Psoas muscle (tissue), 8 donors: ENCODE measurements at regions of chr4 and their contacts with region 1.

Region 1: DNA sequence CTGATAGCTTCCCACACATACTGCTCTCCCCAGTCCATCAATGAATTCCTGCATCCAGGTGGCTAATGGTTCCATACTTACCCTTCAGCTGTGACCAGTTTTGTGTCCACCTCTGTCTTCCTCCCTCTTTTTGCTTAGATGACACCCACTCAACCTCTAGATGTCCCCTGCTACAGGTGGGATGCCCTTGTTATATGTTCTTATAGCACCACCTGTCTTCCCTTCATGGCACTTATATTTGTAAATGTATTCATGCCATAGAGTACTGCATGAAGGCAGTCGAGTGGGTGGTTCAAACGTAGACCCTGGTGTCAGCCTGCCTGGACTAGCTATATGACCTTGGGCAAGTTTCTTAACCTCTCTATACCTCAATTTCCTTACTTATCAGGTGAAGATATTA is 6.5 kb upstream of the USP46 start:
- DNase-seq: no peak
- ATAC-seq: peak; percentile 48 to 83 (median 70)
- H3K4me3 ChIP-seq: no peak overlapping the region
- H3K27ac ChIP-seq: no peak overlapping the region
- H3K4me1 ChIP-seq: no peaks in the 10 kb centered on the region
- H3K27me3 ChIP-seq: peaks cover 0 to 2% (median 0%) of the 10 kb centered on the region in 3 donors
- CTCF ChIP-seq: peak; percentile 41

Region 2: GRCh38 chr4:52376132-52376704 is 289.4 kb before region 1 on chr4:
- intact Hi-C with region 1: loop called (anchors 5 kb)
- DNase-seq: no peak
- ATAC-seq: no peak
- H3K4me3 ChIP-seq: no peak overlapping the region
- H3K27ac ChIP-seq: no peak overlapping the region
- H3K4me1 ChIP-seq: no peaks in the 10 kb centered on the region
- H3K27me3 ChIP-seq: no peaks in the 10 kb centered on the region
- CTCF ChIP-seq: peak; percentile 63

Region 3: GRCh38 chr4:52545099-52546069 is 120.2 kb before region 1 on chr4:
- intact Hi-C with region 1: loop called (anchors 2 to 5 kb)
- DNase-seq: peak; percentile 57 to 80
- ATAC-seq: peak; percentile 77 to 89 (median 84)
- H3K4me3 ChIP-seq: no peak overlapping the region
- H3K27ac ChIP-seq: no peak overlapping the region
- H3K4me1 ChIP-seq: no peaks in the 10 kb centered on the region
- H3K27me3 ChIP-seq: no peaks in the 10 kb centered on the region
- CTCF ChIP-seq: peak; percentile 87

Region 4: GRCh38 chr4:52579602-52580272 is 85.9 kb before region 1 on chr4:
- intact Hi-C with region 1: no loop called
- DNase-seq: no peak
- ATAC-seq: no peak
- H3K4me3 ChIP-seq: no peak overlapping the region
- H3K27ac ChIP-seq: no peak overlapping the region
- H3K4me1 ChIP-seq: no peaks in the 10 kb centered on the region
- H3K27me3 ChIP-seq: no peaks in the 10 kb centered on the region
- CTCF ChIP-seq: no peak